Psoas muscle (tissue), 8 donors: ENCODE measurements at regions of chr12 and their contacts with region 1.

Region 1: GRCh38 chr12:45670346-45671065 is 59.0 kb upstream of the ARID2 start:
- DNase-seq: no peak
- ATAC-seq: peak in 1 of 4 donors; percentile 11
- H3K4me3 ChIP-seq: no peak overlapping the region
- H3K27ac ChIP-seq: peak overlapping the region; percentile 83
- H3K4me1 ChIP-seq: peaks cover 30% of the 10 kb centered on the region
- H3K27me3 ChIP-seq: no peaks in the 10 kb centered on the region
- CTCF ChIP-seq: no peak

Region 2: GRCh38 chr12:45705404-45705803 is 34.9 kb after region 1 on chr12:
- intact Hi-C with region 1: loop called in 1 of 2 experiments (anchors 5 kb)
- DNase-seq: no peak
- ATAC-seq: no peak
- H3K4me3 ChIP-seq: no peak overlapping the region
- H3K27ac ChIP-seq: no peak overlapping the region
- H3K4me1 ChIP-seq: peaks cover 19% of the 10 kb centered on the region
- H3K27me3 ChIP-seq: no peaks in the 10 kb centered on the region
- CTCF ChIP-seq: no peak